H1 (cell line): ENCODE measurements at regions of chr5 and their contacts with region 1.

Region 1: GRCh38 chr5:122076664-122077365 is 1.2 kb downstream of the LOX start:
- DNase-seq: peak in 1 of 2 experiments; percentile 97
- H3K4me3 ChIP-seq: peak overlapping the region; percentile 43 to 79 (median 65)
- H3K27ac ChIP-seq: no peak overlapping the region
- H3K4me1 ChIP-seq: peaks cover 0 to 9% (median 3%) of the 10 kb centered on the region in 4 experiments; a peak in 5 of 7 replicates
- H3K27me3 ChIP-seq: peaks cover 2 to 29% (median 22%) of the 10 kb centered on the region in 4 experiments
- CTCF ChIP-seq: peak; percentile 70 to 93 (median 92)
- EP300 ChIP-seq: no peak
- POLR2A ChIP-seq: no peak
- RAD21 ChIP-seq: peak; percentile 75 to 82

Region 2: GRCh38 chr5:121890297-121890858 is 186.4 kb before region 1 on chr5:
- CTCF ChIA-PET with region 1: no interaction called
- POLR2A ChIA-PET with region 1: no interaction called
- DNase-seq: no peak
- H3K4me3 ChIP-seq: no peak overlapping the region
- H3K27ac ChIP-seq: no peak overlapping the region
- H3K4me1 ChIP-seq: no peaks in the 10 kb centered on the region
- H3K27me3 ChIP-seq: no peaks in the 10 kb centered on the region
- CTCF ChIP-seq: peak; percentile 34 to 55 (median 37)
- EP300 ChIP-seq: no peak
- POLR2A ChIP-seq: no peak
- RAD21 ChIP-seq: peak; percentile 74 to 77

Region 3: GRCh38 chr5:122063836-122064235 is 13.0 kb before region 1 on chr5:
- CTCF ChIA-PET with region 1: interaction called, 18 read pairs
- POLR2A ChIA-PET with region 1: interaction called, 3 read pairs
- DNase-seq: no peak
- H3K4me3 ChIP-seq: no peak overlapping the region
- H3K27ac ChIP-seq: no peak overlapping the region
- H3K4me1 ChIP-seq: 0 out of 7 replicates have a peak, but pooled peaks cover 0 to 2% (median 0%) of the 10 kb centered on the region in 4 experiments
- H3K27me3 ChIP-seq: no peaks in the 10 kb centered on the region
- CTCF ChIP-seq: no peak
- EP300 ChIP-seq: no peak
- POLR2A ChIP-seq: no peak
- RAD21 ChIP-seq: no peak